ENCODE measurements at regions of chr17 and their contacts with region 1.

Region 1: GRCh38 chr17:32659419-32659842 is 172.6 kb downstream of the CDK5R1 start:
- DNase-seq: peak; percentile 43
- ATAC-seq: peak; percentile 64
- H3K4me3 Mint-ChIP-seq: no peak overlapping the region
- H3K27ac Mint-ChIP-seq: no peak overlapping the region
- H3K4me1 Mint-ChIP-seq: no peaks in the 10 kb centered on the region
- H3K27me3 Mint-ChIP-seq: no peaks in the 10 kb centered on the region
- CTCF ChIP-seq: no peak

Region 2: DNA sequence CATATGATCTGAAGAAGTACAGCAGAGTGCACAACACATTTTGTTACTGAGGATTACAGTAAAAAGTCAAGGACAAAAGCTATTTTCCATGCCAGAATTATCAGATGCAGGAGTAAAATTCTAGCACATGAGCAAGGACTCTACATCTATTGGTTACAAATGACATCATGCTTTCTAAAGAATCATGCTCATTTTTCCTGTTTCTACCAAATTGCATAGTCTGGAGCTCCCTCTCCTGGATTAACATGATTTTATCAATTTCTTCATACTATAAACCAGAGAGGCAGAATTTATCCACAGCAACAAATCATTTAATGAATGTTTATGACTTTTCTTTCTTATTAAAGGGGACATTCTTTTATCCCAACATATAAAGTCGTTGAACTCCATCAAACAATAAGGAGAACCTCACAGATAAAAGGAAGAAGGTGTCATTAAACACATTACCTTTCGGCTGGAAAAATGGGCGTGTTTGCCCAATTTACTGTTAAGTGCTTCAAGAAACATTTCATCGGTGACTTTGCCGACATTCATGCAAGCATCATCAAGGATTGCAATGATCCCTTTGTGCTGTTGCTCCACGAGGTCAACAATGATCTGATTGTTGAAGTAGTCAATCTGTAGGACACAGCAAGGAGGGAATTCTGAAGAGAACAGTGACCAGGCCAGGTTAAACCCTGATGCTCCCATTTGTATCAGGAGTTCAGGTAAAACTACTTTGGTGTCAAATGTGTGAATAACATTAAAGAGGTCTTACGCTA is 95.8 kb after region 1 on chr17:
- CTCF ChIA-PET with region 1: interaction called, 3 read pairs
- POLR2A ChIA-PET with region 1: no interaction called
- intact Hi-C with region 1: loop called (anchors 1 kb)
- DNase-seq: no peak
- ATAC-seq: peak; percentile 69
- H3K4me3 Mint-ChIP-seq: no peak overlapping the region
- H3K27ac Mint-ChIP-seq: no peak overlapping the region
- H3K4me1 Mint-ChIP-seq: no peaks in the 10 kb centered on the region
- H3K27me3 Mint-ChIP-seq: no peaks in the 10 kb centered on the region
- CTCF ChIP-seq: no peak

Region 3: DNA sequence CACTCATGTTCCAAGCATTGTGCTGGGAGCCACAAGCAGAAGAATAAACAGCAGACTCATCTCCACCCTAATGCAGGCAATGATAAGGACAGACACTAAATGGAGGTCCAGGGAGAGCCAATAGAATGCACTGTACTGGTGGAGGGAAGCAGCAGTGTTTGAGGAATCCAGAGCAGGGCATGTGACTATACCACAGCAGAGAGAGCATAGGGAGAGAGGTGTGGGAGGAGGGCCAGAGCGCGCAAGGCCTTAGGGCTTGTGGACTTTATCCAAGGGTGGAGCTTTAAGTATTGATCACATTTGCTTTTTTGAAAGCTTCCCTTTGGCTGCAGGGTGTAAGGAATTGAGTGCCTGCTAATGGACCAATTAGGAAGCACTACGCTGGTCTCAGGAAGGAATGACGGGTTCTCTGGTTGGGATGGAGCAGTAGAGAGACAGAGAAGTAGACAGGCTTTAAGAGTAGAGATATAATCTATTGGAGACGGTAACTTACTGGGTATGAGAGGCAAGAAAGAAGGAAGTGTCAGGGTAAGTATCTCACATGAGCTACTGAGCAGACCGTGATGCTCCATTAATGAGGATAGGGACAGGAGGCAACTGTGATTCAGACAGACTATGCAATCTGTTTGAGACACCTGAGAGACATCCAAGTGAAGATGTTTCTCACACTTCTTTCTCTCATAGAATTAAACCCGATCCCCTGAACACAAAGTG is 135.3 kb after region 1 on chr17:
- CTCF ChIA-PET with region 1: no interaction called
- POLR2A ChIA-PET with region 1: no interaction called
- intact Hi-C with region 1: no loop called
- DNase-seq: no peak
- ATAC-seq: no peak
- H3K4me3 Mint-ChIP-seq: no peak overlapping the region
- H3K27ac Mint-ChIP-seq: no peak overlapping the region
- H3K4me1 Mint-ChIP-seq: no peaks in the 10 kb centered on the region
- H3K27me3 Mint-ChIP-seq: no peaks in the 10 kb centered on the region
- CTCF ChIP-seq: no peak

Region 4: GRCh38 chr17:32936894-32937500 is 277.6 kb after region 1 on chr17:
- CTCF ChIA-PET with region 1: interaction called, 9 read pairs
- POLR2A ChIA-PET with region 1: no interaction called
- intact Hi-C with region 1: loop called (anchors 1 kb)
- DNase-seq: peak; percentile 35
- ATAC-seq: peak; percentile 34
- H3K4me3 Mint-ChIP-seq: peak overlapping the region; percentile 28
- H3K27ac Mint-ChIP-seq: no peak overlapping the region
- H3K4me1 Mint-ChIP-seq: peaks cover 3% of the 10 kb centered on the region
- H3K27me3 Mint-ChIP-seq: peaks cover 26% of the 10 kb centered on the region
- CTCF ChIP-seq: peak; percentile 36

Measured in activated B cell treated with CpG ODN at 0.5 μM for 24 hours (primary cell).